ENCODE measurements at regions of chr18 and their contacts with region 1.

Region 1: DNA sequence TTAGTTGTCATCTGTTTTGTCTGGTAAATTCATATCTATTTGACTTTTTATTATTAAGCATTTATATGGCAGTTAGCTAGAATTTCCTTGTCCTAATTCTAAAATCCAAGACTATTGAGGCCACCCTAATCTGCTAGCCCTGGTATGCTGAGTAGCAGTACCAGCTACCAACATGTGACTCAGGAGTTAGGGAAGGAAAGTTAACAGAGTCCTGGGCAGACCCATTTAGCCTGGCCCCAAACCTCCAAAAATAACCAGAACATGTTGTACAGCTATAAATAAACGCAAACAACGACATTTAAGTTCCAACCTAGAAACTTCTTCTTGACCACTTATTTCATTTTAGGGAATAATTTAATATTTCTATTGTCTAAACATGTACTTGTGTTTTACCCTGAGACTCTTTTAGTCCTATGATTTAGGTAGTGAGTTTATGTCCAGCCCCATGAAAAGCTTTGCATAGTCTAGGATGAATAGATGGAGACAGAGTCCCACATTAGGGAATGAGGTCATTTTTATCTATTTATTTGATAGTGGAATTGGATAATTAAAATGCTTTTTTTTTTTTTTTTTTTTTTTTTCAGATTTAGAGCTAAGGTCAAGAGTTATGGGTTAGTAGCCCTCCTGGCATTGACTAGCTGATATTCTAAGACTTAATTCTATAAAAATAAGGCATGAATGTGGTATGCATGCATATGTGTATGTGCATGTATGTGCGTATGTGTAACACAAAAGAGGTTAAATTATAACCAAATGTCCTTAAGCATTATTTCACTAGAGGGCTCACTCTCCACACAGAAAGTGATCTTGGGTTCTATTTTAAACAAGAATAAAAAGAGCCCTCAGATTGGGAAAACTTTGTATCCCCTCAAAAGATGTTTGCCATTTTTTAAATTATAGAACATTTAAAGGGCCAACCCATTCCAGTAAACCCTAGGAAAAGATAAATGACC is 160.1 kb upstream of the MAPRE2 start:
- DNase-seq: no peak
- ATAC-seq: peak; percentile 87 to 95 (median 90)
- H3K4me3 ChIP-seq: no peak overlapping the region
- H3K27ac ChIP-seq: peak overlapping the region; percentile 33 to 88 (median 70)
- H3K4me1 ChIP-seq: peaks cover 0 to 26% (median 10%) of the 10 kb centered on the region in 12 donors
- H3K27me3 ChIP-seq: no peaks in the 10 kb centered on the region
- CTCF ChIP-seq: peak in 9 of 12 donors; percentile 12 to 47 (median 27)
- POLR2A ChIP-seq: no peak

Region 2: DNA sequence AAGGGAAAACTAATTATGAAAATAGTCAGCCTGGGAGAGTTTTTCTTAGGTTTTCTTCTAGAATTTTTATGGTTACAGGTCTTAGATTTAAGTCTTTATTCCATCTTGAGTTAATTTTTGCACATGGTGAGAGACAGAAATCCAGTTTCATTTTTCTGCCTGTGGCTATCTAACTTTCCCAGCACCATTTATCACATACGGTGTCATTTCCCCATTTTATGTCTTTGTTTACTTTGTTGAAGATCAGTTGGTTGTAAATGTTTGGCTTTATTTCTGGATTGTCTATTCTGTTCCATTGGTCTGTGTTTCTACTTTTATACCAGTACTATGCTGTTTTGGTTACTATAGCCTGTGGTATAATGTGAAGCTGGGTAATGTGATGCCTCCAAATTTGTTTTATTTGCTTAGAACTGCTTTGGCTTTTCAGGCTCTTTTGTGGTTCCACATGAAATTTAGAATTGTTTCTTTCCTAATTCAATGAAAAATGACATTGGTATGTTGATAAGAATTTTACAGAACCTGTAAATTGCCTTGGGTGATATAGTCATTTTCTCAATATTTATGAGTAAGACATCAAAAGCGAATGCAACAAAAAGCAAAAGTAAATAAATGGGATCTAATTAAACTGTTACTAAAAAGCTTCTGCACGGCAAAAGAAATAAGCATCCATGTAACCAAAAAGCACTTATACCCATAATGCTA is 510.3 kb before region 1 on chr18:
- intact Hi-C with region 1: no loop called
- DNase-seq: no peak
- ATAC-seq: no peak
- H3K4me3 ChIP-seq: no peak overlapping the region
- H3K27ac ChIP-seq: no peak overlapping the region
- H3K4me1 ChIP-seq: no peaks in the 10 kb centered on the region
- H3K27me3 ChIP-seq: no peaks in the 10 kb centered on the region
- CTCF ChIP-seq: no peak
- POLR2A ChIP-seq: no peak

Region 3: DNA sequence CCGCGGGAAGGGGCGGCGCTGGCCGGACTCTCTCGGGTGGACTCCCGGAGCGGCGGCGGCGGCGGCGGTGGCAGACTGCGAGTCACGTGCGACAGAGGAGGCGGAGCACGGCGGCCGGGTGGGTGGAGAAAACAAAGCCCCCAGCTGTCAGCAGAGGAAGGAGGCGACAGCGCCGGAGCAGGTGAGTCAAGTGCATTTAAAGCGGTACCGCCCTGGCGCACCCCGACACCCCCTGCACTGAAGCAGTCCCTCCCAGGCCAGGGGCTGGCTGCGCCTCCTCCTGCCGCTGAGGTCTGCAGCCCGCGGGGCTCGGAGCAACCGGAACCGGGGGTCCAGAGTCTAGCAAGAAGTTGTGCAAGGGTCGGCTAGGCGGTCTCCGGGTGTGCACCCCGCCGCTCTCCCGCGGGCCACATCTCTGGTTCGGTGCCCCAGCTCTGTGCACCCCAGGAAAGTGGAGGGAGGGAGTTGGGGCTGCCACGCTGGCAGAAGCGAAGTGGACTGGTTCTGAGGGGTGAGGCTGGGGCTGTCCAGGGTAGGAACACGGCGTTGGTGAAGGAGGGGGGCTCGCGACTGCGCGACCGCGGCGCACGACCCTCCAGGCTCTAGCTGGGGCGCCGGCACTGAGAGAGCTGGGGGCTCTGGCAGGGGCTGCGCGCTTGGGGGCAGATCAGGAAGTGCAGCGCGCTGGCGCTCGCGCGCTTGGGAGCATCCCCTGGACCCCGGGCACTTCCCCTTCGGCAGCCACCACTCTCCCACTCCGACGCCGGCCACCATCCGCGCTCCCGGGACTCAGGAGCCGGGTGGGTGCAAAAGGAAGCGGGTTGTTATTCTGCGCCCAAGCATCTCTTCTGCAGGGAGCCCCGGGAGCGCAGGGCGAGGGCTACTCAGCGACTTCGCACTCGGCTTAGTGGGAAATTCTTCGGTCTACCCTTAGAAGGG is 96.0 kb after region 1 on chr18:
- intact Hi-C with region 1: loop called in 2 of 10 experiments (anchors 5 to 10 kb)
- DNase-seq: peak; percentile 82 to 91 (median 85)
- ATAC-seq: peak; percentile 48 to 85 (median 80)
- H3K4me3 ChIP-seq: peak overlapping the region; percentile 68 to 95 (median 88)
- H3K27ac ChIP-seq: peak overlapping the region in 11 of 12 donors; percentile 3 to 75 (median 60)
- H3K4me1 ChIP-seq: peaks cover 0 to 31% (median 13%) of the 10 kb centered on the region in 12 donors
- H3K27me3 ChIP-seq: no peaks in the 10 kb centered on the region
- CTCF ChIP-seq: peak in 1 of 12 donors; percentile 13
- POLR2A ChIP-seq: peak in 1 of 2 donors; percentile 65